BJ (cell line): ENCODE measurements at regions of chr22 and their contacts with region 1.

Region 1: DNA sequence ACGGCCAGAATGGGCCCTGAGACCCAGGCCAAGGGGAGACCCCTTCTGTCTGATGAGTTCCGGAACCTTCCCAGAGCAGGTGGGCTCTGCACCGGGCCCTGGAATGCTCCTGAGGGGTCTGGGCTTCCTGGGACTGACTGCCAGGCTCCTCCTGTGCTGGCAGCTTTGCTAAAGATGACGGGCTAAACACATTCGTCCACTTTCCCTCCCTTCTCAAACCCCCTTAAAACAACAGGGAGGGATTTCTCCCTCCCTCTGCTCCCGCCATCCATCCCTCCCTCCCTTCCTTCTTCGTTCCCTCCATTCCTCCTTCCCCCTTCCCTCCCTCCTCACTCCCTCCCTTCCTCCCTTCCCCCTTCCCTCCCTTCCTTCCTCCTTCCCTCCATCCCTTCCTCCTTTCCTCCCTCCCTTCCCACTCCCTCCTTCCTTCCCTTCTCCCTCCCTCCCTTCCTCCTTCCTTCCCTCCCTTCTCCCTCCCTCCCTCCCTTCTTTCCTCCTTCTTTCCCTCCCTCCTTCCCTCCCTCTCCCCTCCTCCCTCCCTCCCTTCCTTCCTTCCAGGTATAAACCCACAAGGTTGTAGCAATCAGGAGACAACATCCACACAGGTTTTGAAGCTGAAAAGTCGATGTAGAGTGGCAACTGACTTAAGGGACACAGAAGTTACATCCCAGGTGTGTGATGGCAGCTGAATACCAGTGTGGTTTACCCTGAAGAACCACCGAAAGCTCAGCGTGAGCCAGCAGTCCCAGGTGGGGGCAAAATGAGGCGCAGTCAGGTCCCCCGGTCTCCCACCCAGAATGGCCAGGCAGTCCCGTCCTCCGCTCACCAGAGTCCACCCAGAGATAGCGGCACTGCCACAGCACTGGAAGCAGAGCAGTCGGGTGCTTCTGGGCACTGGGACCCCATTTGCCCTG is 18.8 kb upstream of the MGAT3 start:
- DNase-seq: no peak
- H3K4me3 ChIP-seq: no peak overlapping the region
- H3K27me3 ChIP-seq: no peaks in the 10 kb centered on the region
- CTCF ChIP-seq: no peak

Region 2: GRCh38 chr22:39452740-39453040 is 14.6 kb after region 1 on chr22:
- CTCF ChIA-PET with region 1: interaction called, 12 read pairs
- POLR2A ChIA-PET with region 1: no interaction called
- DNase-seq: no peak
- H3K4me3 ChIP-seq: no peak overlapping the region
- H3K27me3 ChIP-seq: peaks cover 14% of the 10 kb centered on the region
- CTCF ChIP-seq: no peak